Left colon (tissue), 2 donors: ENCODE measurements at regions of chr11 and their contacts with region 1.

Region 1: GRCh38 chr11:93543292-93543977 is at the start of gene SMCO4:
- DNase-seq: peak; percentile 85 to 91
- ATAC-seq: peak; percentile 92
- total RNA-seq, gene SMCO4: 56.8 to 74.8 TPM

Region 2: DNA sequence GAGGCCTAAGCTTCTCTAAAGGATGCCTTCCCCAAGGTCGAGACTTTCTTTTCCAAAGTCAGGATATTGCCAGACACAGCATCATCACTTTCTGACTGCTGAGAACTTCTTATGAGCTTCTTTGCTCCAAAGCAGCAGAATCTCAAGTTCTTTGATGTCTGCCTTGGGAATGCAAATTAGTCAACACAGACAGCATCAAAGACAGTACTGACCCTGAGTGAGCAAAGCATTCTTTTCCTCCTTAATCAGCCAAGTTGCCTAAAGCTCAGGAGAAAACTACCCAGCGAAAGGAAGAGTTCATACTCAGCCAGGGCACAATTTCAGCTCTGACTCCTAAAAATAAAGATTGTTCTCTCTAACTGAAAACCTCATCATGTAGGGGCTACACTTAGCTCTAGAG is 443.6 kb before region 1 on chr11:
- intact Hi-C with region 1: no loop called
- DNase-seq: no peak
- ATAC-seq: no peak

Region 3: DNA sequence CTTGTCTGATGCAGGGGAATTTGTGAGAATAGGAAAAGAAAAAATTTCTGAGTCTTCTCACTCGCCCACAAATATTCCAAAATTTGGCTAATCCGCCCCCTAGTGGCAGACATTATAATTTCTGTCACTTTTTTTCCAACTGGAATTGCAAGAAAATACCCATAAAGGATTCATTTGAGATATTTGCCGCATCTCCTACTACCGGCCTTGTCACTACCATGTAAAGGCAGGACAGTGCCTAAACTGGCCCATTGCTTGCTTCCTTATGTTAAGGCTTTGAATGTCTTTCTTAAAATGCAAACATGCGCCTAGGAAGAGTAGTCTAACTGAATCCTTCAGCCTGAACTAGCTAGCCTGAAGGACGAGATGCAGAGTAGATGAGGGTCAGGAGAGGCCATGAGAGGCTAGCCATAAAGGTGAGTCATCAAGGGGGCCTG is 108.7 kb after region 1 on chr11:
- intact Hi-C with region 1: loop called in 1 of 2 experiments (anchors 10 kb)
- DNase-seq: no peak
- ATAC-seq: no peak